GM13976 (cell line): ENCODE measurements at regions of chr12 and their contacts with region 1.

Region 1: GRCh38 chr12:80186727-80187217 is 87.4 kb downstream of the OTOGL start:
- DNase-seq: peak; percentile 30
- CTCF ChIP-seq: peak; percentile 43

Region 2: GRCh38 chr12:79766705-79767464 is 419.9 kb before region 1 on chr12:
- in situ Hi-C with region 1: loop called (anchors 25 kb)
- DNase-seq: no peak
- CTCF ChIP-seq: no peak